GM12878 (cell line): ENCODE measurements at regions of chr13 and their contacts with region 1.

Region 1: DNA sequence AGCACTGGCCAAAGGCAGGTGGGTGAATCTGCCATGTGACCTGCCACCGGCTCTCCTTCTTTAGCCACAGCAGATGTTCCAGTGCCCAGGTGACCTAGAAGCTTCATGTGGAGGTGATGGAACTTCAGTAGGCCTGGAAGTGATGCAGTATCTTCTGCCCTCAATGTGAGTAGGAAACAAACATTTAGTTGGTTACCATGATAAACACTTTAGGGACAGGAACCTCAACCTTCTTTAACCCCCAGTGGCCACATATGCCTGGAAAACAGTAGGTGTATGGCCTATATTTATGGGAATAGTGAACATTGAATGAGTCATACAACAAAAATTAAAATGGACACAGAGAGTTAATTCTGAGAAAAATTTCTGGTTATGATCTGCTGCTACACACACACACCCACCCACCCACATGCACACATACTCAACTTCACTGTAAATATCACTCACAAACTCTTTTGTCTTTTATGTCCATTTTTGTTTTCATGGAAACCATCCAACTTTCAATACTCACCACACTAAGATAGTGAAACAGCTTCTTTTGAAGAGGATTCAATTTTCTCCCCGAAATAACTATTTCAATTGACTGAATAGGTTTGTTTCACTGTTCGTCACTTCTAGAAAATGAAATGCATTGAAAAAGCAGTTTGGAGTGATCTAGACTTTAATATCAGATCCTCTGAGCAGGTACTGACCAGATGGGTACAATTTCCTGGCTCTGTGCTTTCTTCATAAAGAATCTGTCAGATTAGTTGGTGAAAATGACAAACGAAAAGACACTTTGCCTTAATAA is 97.3 kb downstream of the STARD13 start:
- DNase-seq: peak; percentile 79
- ATAC-seq: peak; percentile 75
- H3K4me3 ChIP-seq: peak overlapping the region; percentile 24; the same call in 1 of the 2 replicates
- H3K27ac ChIP-seq: peak overlapping the region; percentile 93
- H3K4me1 ChIP-seq: peaks cover 31% of the 10 kb centered on the region
- H3K27me3 ChIP-seq: no peaks in the 10 kb centered on the region
- CTCF ChIP-seq: no peak
- EP300 ChIP-seq: peak; percentile 49 to 56
- POLR2A ChIP-seq: no peak
- RAD21 ChIP-seq: peak; percentile 13; the same call in 1 of the 2 replicates

Region 2: DNA sequence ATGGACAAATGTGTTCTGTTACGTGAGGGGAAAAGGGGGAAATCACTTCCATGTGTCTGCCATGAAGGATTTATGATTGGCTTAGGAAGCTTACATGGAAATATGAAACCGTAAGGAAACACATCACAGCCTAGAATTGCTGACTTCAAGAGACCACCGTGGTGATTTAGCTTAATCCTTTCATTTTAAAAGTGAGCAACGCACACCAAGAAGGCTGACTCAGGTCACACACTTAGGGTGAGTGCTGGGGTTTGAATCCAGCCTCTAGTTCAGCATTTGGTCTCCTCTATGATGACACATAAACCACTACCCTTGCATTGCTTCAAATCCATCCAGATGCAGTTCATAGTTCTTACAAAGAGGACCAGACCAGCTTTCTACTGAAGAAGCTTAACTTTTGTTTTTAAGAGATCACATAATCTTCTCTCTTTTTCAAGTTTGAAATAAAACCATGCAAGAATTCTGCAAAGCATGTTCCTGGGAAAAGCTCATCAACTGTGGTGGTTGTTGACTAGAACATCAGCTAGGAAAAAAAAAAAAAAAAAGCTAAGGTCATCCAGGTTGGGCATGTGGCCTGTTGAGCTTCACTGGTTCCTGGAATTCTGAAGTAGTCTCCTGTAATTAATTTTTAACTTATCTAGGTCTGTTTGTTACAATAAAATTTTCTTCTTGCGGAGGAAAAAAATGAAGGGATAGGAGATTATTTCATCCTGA is 232.2 kb before region 1 on chr13:
- CTCF ChIA-PET with region 1: no interaction called
- POLR2A ChIA-PET with region 1: no interaction called
- RAD21 ChIA-PET with region 1: no interaction called
- SMC1A ChIA-PET with region 1: no interaction called
- in situ Hi-C with region 1: no loop called
- intact Hi-C with region 1: no loop called
- DNase-seq: no peak
- ATAC-seq: no peak
- H3K4me3 ChIP-seq: no peak overlapping the region
- H3K27ac ChIP-seq: no peak overlapping the region
- H3K4me1 ChIP-seq: no peaks in the 10 kb centered on the region
- H3K27me3 ChIP-seq: no peaks in the 10 kb centered on the region; a peak in 1 of 4 replicates
- CTCF ChIP-seq: no peak
- EP300 ChIP-seq: no peak
- POLR2A ChIP-seq: no peak
- RAD21 ChIP-seq: no peak

Region 3: DNA sequence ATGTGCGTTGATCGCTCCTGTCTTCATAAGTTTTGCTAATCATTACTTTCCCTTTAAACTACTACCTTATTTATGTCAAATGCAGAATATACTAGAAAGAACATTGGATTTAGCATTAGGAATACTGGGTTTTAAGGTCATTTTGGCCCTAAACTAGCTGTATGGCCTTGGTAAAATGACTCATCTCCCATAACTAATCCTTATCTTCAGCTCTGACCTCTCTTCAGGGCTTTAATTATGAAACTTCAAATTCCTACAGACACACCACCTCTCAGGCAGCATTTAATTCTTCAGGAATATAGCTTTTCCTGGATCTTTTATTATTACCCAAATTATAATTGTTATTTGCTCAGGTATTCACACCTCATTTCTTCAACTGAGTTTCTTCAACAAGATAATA is 24.0 kb before region 1 on chr13:
- CTCF ChIA-PET with region 1: interaction called, 4 read pairs
- POLR2A ChIA-PET with region 1: interaction called, 3 read pairs
- RAD21 ChIA-PET with region 1: no interaction called
- SMC1A ChIA-PET with region 1: interaction called, 832 read pairs
- in situ Hi-C with region 1: no loop called
- intact Hi-C with region 1: no loop called
- DNase-seq: no peak
- ATAC-seq: no peak
- H3K4me3 ChIP-seq: no peak overlapping the region
- H3K27ac ChIP-seq: no peak overlapping the region
- H3K4me1 ChIP-seq: no peaks in the 10 kb centered on the region
- H3K27me3 ChIP-seq: no peaks in the 10 kb centered on the region
- CTCF ChIP-seq: no peak
- EP300 ChIP-seq: no peak
- POLR2A ChIP-seq: no peak
- RAD21 ChIP-seq: no peak

Region 4: DNA sequence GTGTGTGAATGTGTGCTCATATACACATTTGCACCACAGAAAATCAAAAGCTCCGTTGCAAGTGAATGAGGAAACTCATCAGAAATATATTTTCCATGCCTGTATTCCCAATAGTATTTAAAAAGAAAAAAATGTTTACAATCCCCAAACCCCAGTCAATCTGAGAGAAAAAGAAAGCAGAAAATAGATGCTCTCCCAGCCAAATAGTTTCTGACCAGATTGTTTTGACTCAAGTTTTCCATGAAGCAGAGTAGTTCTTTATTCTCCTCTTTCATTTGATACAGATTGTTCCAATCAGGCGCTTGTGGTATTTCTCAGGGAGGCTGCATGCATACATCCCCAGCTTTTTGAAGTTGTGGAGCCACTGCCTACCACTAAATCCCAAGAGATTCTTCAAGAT is 13.4 kb before region 1 on chr13:
- CTCF ChIA-PET with region 1: interaction called, 6 read pairs
- POLR2A ChIA-PET with region 1: interaction called, 46 read pairs
- RAD21 ChIA-PET with region 1: interaction called, 5 read pairs
- SMC1A ChIA-PET with region 1: interaction called, 89 read pairs
- in situ Hi-C with region 1: no loop called
- intact Hi-C with region 1: no loop called
- DNase-seq: no peak
- ATAC-seq: no peak
- H3K4me3 ChIP-seq: no peak overlapping the region
- H3K27ac ChIP-seq: no peak overlapping the region
- H3K4me1 ChIP-seq: no peaks in the 10 kb centered on the region
- H3K27me3 ChIP-seq: no peaks in the 10 kb centered on the region
- CTCF ChIP-seq: no peak
- EP300 ChIP-seq: no peak
- POLR2A ChIP-seq: no peak
- RAD21 ChIP-seq: no peak